ENCODE measurements at regions of chr15 and their contacts with region 1.

Region 1: GRCh38 chr15:59828871-59829270 is 139.8 kb upstream of the BNIP2 start:
- DNase-seq: peak; percentile 59
- H3K4me3 Mint-ChIP-seq: peak overlapping the region; percentile 42
- H3K27ac Mint-ChIP-seq: peak overlapping the region; percentile 50
- H3K4me1 Mint-ChIP-seq: peaks cover 35% of the 10 kb centered on the region
- H3K27me3 Mint-ChIP-seq: no peaks in the 10 kb centered on the region
- CTCF ChIP-seq: no peak

Region 2: DNA sequence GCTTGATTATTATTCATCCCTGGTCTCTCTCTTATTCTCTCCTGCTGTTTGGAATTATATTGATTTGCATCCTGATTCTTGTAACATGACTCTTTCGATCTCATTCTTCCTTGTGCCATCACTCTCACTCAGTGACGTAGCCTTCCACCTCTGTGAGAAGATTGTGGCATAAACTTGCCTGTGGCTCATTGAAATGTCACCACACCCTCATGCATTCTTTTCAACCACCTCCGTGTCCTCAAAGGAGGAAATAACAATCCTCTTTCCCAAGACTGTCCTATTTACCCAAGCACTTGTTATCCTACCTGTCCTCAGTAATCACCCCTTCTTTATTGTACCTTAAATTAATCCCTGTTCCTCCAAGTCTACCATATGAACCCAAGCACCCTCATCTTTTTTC is 258.5 kb before region 1 on chr15:
- CTCF ChIA-PET with region 1: no interaction called
- POLR2A ChIA-PET with region 1: no interaction called
- intact Hi-C with region 1: no loop called
- DNase-seq: peak; percentile 64
- H3K4me3 Mint-ChIP-seq: no peak overlapping the region
- H3K27ac Mint-ChIP-seq: peak overlapping the region; percentile 28
- H3K4me1 Mint-ChIP-seq: peaks cover 22% of the 10 kb centered on the region
- H3K27me3 Mint-ChIP-seq: no peaks in the 10 kb centered on the region
- CTCF ChIP-seq: no peak

Region 3: DNA sequence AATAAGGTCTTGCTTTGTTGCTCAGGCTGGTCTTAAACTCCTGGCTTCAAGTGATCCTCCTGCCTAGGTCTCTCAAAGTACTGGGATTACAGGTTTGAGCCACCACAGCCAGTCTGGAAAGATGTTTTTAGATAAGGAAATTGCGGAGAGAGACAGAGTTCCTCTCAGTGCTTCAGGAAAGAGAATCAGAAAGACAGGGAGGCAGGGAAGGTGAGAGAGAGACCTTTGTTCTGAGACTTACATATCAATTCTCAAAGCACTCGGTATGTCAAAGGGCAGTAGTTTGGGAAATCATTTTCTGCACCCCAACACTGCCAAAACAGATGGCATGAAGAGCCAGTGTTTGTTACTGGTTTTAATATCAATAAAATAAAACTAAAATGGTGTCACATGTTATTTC is 230.4 kb before region 1 on chr15:
- CTCF ChIA-PET with region 1: no interaction called
- POLR2A ChIA-PET with region 1: no interaction called
- intact Hi-C with region 1: no loop called
- DNase-seq: no peak
- H3K4me3 Mint-ChIP-seq: no peak overlapping the region
- H3K27ac Mint-ChIP-seq: no peak overlapping the region
- H3K4me1 Mint-ChIP-seq: peaks cover 10% of the 10 kb centered on the region
- H3K27me3 Mint-ChIP-seq: no peaks in the 10 kb centered on the region
- CTCF ChIP-seq: no peak

Region 4: DNA sequence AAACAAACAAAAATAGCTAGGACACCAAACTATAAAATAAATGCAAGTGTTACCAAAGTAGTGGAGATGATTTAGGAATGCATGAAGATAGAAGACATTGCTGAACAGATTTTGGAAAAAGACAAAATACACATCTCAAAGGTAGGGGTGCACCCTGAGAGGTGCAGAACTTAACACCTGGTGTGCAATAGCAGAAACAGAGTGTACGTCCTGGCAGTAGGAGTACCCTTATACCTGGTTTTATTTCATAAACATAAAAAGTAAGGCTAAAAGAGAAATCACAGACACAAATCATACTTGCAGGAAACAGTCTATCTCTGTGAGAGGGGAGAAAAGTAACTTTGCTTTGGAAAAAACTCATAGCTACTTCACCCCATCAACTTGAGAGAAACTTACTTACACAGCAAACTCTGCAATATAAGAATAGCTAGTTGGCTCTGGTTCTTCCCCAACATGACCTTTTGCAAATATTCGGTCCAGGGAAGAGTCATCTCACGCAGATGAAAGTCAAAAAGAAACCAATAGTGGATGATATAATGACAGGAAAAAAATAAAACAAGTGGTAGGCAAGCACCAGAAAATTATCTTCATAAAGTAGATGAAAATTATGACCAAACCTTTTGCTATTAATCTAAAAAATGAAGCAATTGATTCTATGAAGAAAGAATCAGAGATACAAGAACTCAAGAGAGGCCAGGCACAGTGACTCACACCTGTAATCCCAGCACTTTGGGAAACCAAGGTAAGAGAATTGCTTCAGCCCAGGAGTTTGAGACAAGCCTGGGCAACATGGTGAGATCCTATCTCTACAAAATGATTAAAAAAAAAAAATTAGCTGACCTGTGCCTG is 30.9 kb before region 1 on chr15:
- CTCF ChIA-PET with region 1: interaction called, 3 read pairs
- POLR2A ChIA-PET with region 1: interaction called, 10 read pairs
- intact Hi-C with region 1: no loop called
- DNase-seq: peak; percentile 40
- H3K4me3 Mint-ChIP-seq: no peak overlapping the region
- H3K27ac Mint-ChIP-seq: peak overlapping the region; percentile 53
- H3K4me1 Mint-ChIP-seq: peaks cover 22% of the 10 kb centered on the region
- H3K27me3 Mint-ChIP-seq: peaks cover 7% of the 10 kb centered on the region
- CTCF ChIP-seq: no peak

Region 5: GRCh38 chr15:59838900-59839299 is 10.0 kb after region 1 on chr15:
- CTCF ChIA-PET with region 1: no interaction called
- POLR2A ChIA-PET with region 1: interaction called, 10 read pairs
- intact Hi-C with region 1: no loop called
- DNase-seq: no peak
- H3K4me3 Mint-ChIP-seq: no peak overlapping the region
- H3K27ac Mint-ChIP-seq: no peak overlapping the region
- H3K4me1 Mint-ChIP-seq: no peaks in the 10 kb centered on the region
- H3K27me3 Mint-ChIP-seq: no peaks in the 10 kb centered on the region
- CTCF ChIP-seq: no peak

Measured in MCF 10A (cell line).